ENCODE measurements at regions of chr20 and their contacts with region 1.

Region 1: DNA sequence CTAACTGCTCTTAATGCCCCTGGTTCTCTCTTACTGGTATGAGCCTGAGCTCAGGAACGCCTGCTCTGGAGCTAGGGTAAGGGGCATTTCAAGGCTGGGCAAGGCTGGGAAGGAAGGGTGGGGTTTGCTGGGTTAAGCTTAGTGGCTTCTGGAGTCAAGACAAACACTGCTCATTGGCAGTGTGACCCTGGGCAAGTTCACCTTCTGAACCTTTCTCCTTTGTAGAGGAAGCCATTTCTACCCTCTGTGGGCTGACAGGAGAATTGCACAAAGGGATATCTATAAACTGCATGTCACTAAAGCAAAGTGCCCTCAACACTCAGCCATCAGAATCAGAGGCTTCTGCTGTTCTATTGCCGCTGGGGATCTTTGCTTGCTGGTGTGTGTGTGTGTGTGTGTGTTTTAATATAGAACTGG is 20.3 kb upstream of the LRRN4 start:
- DNase-seq: no peak
- H3K4me3 ChIP-seq: no peak overlapping the region
- H3K27ac ChIP-seq: no peak overlapping the region
- H3K4me1 ChIP-seq: no peaks in the 10 kb centered on the region
- H3K27me3 ChIP-seq: no peaks in the 10 kb centered on the region
- CTCF ChIP-seq: no peak
- EP300 ChIP-seq: no peak
- POLR2A ChIP-seq: no peak

Region 2: GRCh38 chr20:4369798-4370124 is 1704.4 kb before region 1 on chr20:
- intact Hi-C with region 1: no loop called
- DNase-seq: no peak
- H3K4me3 ChIP-seq: no peak overlapping the region
- H3K27ac ChIP-seq: no peak overlapping the region
- H3K4me1 ChIP-seq: no peaks in the 10 kb centered on the region
- H3K27me3 ChIP-seq: no peaks in the 10 kb centered on the region
- CTCF ChIP-seq: no peak
- EP300 ChIP-seq: no peak
- POLR2A ChIP-seq: no peak

Region 3: DNA sequence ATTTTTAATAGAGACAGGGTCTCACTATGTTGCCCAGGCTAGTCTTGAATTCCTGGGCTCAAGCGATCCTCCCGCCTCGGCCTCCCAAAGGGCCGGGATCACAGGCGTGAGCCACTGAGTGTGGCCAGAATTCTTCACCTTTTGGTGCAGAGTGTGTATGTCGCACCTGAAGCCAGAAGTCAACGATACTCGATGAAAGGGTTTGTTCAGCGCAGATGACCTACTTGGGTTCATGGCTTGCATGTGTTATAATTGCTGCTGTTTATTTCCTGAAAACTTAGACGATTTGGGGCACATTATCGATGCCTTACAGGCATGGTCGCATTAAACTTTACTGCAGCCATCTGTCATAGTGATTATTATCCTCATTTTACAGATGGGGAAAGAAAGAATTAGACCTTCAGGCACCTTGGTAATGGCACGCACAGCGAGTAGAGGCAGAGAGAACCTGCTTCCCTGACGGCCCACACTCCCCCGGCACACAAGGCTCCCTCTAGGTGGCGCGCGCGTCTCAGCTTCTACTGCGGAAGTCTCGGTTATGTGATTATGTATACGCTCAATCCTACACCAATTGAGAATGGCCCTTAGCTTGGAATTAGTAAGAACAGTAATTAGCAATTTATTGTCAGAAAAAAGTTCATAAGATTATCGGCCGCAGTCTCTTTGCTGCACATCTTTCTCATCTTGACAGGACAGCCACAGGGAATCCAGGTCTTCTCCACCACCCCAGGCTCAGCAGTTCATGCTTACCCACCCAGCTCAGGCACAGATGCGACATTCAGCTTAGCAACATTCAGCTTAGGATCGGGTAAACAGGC is 544.6 kb before region 1 on chr20:
- intact Hi-C with region 1: loop called (anchors 2 to 5 kb)
- DNase-seq: peak; percentile 77 to 88 (median 84)
- H3K4me3 ChIP-seq: no peak overlapping the region
- H3K27ac ChIP-seq: no peak overlapping the region
- H3K4me1 ChIP-seq: no peaks in the 10 kb centered on the region
- H3K27me3 ChIP-seq: no peaks in the 10 kb centered on the region
- CTCF ChIP-seq: peak; percentile 48 to 67 (median 62)
- EP300 ChIP-seq: no peak
- POLR2A ChIP-seq: no peak

Region 4: GRCh38 chr20:5797843-5798462 is 276.2 kb before region 1 on chr20:
- intact Hi-C with region 1: loop called in 1 of 4 experiments (anchors 10 kb)
- DNase-seq: no peak
- H3K4me3 ChIP-seq: no peak overlapping the region
- H3K27ac ChIP-seq: no peak overlapping the region
- H3K4me1 ChIP-seq: no peaks in the 10 kb centered on the region
- H3K27me3 ChIP-seq: no peaks in the 10 kb centered on the region
- CTCF ChIP-seq: no peak
- EP300 ChIP-seq: no peak
- POLR2A ChIP-seq: no peak

Region 5: GRCh38 chr20:5822569-5822968 is 251.6 kb before region 1 on chr20:
- intact Hi-C with region 1: no loop called
- DNase-seq: no peak
- H3K4me3 ChIP-seq: no peak overlapping the region
- H3K27ac ChIP-seq: no peak overlapping the region
- H3K4me1 ChIP-seq: no peaks in the 10 kb centered on the region
- H3K27me3 ChIP-seq: no peaks in the 10 kb centered on the region
- CTCF ChIP-seq: no peak
- EP300 ChIP-seq: no peak
- POLR2A ChIP-seq: no peak

Measured in ovary (tissue), 10 donors.